OCI-LY7 (cell line): ENCODE measurements at regions of chr9 and their contacts with region 1.

Region 1: DNA sequence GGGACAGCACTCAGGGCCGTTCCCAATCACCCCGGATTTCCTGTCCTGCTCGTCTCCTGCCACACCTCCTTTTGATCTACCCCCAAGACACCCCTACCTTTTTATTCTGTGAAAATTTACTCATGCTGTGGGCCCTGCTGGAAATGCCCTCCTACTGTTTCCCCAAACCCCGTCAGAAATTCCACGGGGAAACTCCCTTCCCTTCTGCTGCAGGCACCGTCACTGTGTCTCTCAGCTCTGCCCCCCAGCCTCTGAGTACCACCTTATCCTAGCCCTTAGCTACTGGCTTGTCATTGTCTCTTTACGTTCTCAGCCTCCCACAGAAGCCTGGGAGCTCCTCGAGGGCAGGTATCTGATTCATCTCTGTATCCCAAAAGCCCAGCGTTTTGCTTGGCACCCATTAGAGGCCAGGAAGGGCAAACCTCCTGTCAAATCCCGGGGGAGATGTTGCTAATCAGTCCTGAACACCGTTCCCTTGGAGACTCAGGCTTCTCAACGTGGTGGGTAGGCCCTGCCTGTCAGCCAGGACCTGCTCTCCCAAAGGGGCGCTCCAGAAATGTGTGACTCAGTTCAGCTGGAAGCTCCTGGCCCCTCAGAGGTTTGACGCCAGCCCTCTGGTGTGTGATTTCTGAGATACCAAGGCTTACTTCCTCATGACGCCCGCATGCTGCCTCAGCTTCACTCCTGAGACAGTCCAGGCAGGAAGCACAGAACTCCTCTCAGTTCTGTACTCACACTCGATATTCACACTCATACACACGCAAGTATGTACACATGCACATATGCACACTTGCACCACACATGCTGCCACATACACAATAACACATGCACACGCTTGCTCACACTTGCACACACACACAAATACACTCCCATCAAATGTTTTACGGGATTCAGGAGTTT is 50.7 kb upstream of the GRHPR start:
- DNase-seq: peak; percentile 70
- H3K4me3 ChIP-seq: peak overlapping the region; percentile 37
- H3K27ac ChIP-seq: peak overlapping the region; percentile 99
- H3K4me1 ChIP-seq: peaks cover 86% of the 10 kb centered on the region
- CTCF ChIP-seq: no peak

Region 2: GRCh38 chr9:36995927-36996705 is 375.7 kb before region 1 on chr9:
- CTCF ChIA-PET with region 1: no interaction called
- POLR2A ChIA-PET with region 1: no interaction called
- intact Hi-C with region 1: loop called (anchors 5 kb)
- DNase-seq: peak; percentile 57
- H3K4me3 ChIP-seq: peak overlapping the region; percentile 17
- H3K27ac ChIP-seq: peak overlapping the region; percentile 64
- H3K4me1 ChIP-seq: peaks cover 87% of the 10 kb centered on the region
- CTCF ChIP-seq: peak; percentile 84

Region 3: DNA sequence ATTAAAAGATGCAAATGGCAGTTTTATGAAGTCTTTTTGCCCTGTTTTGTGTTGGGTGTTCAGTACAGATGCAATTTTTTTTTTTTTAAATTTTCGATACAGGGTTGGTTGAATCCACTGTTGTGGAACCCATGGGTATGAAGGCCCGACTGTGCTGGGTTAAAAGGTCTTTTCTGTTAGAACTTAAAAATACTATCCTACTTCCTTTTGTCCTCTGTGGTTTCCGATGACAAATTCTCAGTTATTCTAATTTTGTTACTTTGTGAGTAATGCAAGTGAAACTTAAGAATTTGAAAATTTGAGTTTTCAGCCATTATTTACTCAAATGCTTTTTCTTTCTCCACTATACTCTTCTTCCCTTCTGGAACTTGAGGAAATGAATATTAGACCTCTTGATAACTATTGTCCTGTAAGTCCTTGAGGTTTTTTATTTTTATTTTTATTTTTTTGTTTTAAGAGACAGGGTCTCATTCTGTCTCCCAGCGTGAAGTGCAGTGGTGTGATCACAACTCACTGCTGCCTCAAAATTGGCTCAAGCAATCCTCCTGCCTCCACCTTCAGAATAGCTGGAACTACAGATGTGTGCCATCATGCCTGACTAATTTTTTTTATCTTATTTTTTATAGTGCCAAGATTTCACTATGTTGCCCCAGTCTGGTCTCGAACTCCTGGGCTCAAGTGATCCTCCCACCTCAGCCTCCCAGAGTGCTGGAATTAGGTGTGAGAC is 183.9 kb before region 1 on chr9:
- CTCF ChIA-PET with region 1: no interaction called
- POLR2A ChIA-PET with region 1: interaction called, 11 read pairs
- intact Hi-C with region 1: no loop called
- DNase-seq: peak; percentile 76
- H3K4me3 ChIP-seq: peak overlapping the region; percentile 64
- H3K27ac ChIP-seq: peak overlapping the region; percentile 90
- H3K4me1 ChIP-seq: peaks cover 72% of the 10 kb centered on the region
- CTCF ChIP-seq: no peak

Region 4: DNA sequence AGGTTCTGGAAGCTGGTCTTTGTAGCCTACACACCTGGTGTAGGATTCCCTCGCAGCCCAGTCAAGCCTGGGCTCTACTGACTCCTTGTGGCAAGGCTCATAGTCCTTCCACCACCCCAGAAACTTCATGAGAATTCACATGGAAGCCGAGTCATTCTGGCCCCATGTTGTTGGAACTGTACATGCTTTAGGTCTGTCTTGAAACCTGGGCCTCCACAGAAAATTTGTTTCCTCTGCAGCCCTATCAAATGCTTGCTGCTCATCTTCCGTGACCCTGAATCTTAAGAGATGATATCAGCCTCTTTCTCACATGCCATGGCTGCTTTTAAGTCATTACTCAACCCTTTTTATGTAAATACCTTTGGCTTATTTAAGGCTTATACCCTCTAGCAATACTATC is 62.7 kb before region 1 on chr9:
- CTCF ChIA-PET with region 1: no interaction called
- POLR2A ChIA-PET with region 1: interaction called, 11 read pairs
- intact Hi-C with region 1: no loop called
- DNase-seq: peak; percentile 54
- H3K4me3 ChIP-seq: no peak overlapping the region
- H3K27ac ChIP-seq: peak overlapping the region; percentile 19
- H3K4me1 ChIP-seq: peaks cover 39% of the 10 kb centered on the region
- CTCF ChIP-seq: peak; percentile 74

Region 5: GRCh38 chr9:37337301-37337890 is 34.4 kb before region 1 on chr9:
- CTCF ChIA-PET with region 1: no interaction called
- POLR2A ChIA-PET with region 1: interaction called, 35 read pairs
- intact Hi-C with region 1: no loop called
- DNase-seq: peak; percentile 64
- H3K4me3 ChIP-seq: peak overlapping the region; percentile 52
- H3K27ac ChIP-seq: peak overlapping the region; percentile 98
- H3K4me1 ChIP-seq: peaks cover 86% of the 10 kb centered on the region
- CTCF ChIP-seq: no peak

Region 6: GRCh38 chr9:37408933-37409710 is 37.3 kb after region 1 on chr9:
- CTCF ChIA-PET with region 1: interaction called, 21 read pairs
- POLR2A ChIA-PET with region 1: interaction called, 298 read pairs
- intact Hi-C with region 1: loop called (anchors 1 kb)
- DNase-seq: peak; percentile 100
- H3K4me3 ChIP-seq: peak overlapping the region; percentile 74
- H3K27ac ChIP-seq: peak overlapping the region; percentile 97
- H3K4me1 ChIP-seq: peaks cover 98% of the 10 kb centered on the region
- CTCF ChIP-seq: 0 out of 2 replicates have a peak, but pooled peaks have one; percentile 29

Region 7: GRCh38 chr9:37511016-37512010 is 139.5 kb after region 1 on chr9:
- CTCF ChIA-PET with region 1: no interaction called
- POLR2A ChIA-PET with region 1: no interaction called
- intact Hi-C with region 1: no loop called
- DNase-seq: peak; percentile 49
- H3K4me3 ChIP-seq: no peak overlapping the region
- H3K27ac ChIP-seq: no peak overlapping the region
- H3K4me1 ChIP-seq: peaks cover 4% of the 10 kb centered on the region
- CTCF ChIP-seq: peak; percentile 42; the same call in 1 of the 2 replicates